ENCODE measurements at regions of chr4 and their contacts with region 1.

Region 1: GRCh38 chr4:88514557-88515511 is 8.7 kb downstream of the PYURF start:
- DNase-seq: no peak
- H3K4me3 ChIP-seq: no peak overlapping the region
- H3K27ac ChIP-seq: no peak overlapping the region
- H3K4me1 ChIP-seq: peaks cover 4% of the 10 kb centered on the region
- H3K27me3 ChIP-seq: no peaks in the 10 kb centered on the region
- CTCF ChIP-seq: no peak

Region 2: DNA sequence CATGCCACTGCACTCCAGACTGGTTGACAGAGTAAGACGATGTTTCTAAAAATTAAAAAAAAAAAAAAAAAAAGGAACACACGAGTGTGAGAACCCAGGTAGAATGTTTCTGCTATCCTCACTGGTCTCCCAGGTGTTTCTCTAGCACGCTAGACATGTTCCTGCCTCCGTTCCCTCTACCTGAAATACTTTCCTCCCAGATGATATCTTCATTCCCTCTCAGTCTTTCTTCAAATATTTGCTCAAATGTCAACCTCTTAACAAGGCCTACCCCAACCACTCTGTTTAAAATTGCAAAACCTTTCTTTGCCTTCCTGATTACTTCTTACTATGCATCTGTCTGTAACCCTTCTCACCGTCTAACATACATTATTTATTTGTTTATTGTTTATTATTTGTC is 296.9 kb before region 1 on chr4:
- intact Hi-C with region 1: loop called (anchors 2 kb)
- DNase-seq: no peak
- H3K4me3 ChIP-seq: no peak overlapping the region
- H3K27ac ChIP-seq: no peak overlapping the region
- H3K4me1 ChIP-seq: peaks cover 3% of the 10 kb centered on the region
- H3K27me3 ChIP-seq: no peaks in the 10 kb centered on the region
- CTCF ChIP-seq: no peak

Region 3: DNA sequence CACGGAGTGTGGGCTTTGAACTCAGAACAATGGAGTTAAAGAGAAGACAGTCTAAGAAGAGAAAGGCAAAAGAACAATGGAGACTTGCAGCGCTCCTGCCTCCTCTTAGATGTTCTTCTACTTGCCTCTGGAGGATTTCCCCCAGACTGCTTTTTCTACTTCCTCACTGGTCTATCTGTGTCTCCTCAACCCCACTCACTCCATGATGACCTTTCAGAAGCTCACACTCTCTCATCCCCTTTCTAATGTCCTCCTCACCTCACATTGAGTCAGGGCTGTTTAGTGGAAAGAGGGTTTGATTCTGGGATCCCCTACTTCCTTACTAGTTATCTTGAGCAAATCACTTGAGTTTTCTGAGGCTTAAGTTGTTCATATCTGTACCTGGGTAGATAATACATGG is 148.4 kb before region 1 on chr4:
- intact Hi-C with region 1: loop called (anchors 10 kb)
- DNase-seq: no peak
- H3K4me3 ChIP-seq: no peak overlapping the region
- H3K27ac ChIP-seq: no peak overlapping the region
- H3K4me1 ChIP-seq: peaks cover 8% of the 10 kb centered on the region
- H3K27me3 ChIP-seq: no peaks in the 10 kb centered on the region
- CTCF ChIP-seq: no peak

Measured in left ventricle myocardium inferior (tissue), 1 donor.